Activated CD4-positive, alpha-beta T cell treated with anti-CD3 and anti-CD28 coated beads, Interleukin-2, amount 10 ng/mL, durations not matched to agents 24 days and 14 days (primary cell): ENCODE measurements at regions of chrX and their contacts with region 1.

Region 1: GRCh38 chrX:2608638-2609430 is 82.3 kb upstream of the CD99 start:
- DNase-seq: peak; percentile 97
- H3K4me3 Mint-ChIP-seq: peak overlapping the region; percentile 95
- H3K27ac Mint-ChIP-seq: peak overlapping the region; percentile 93
- H3K4me1 Mint-ChIP-seq: peaks cover 46% of the 10 kb centered on the region
- H3K27me3 Mint-ChIP-seq: no peaks in the 10 kb centered on the region

Region 2: DNA sequence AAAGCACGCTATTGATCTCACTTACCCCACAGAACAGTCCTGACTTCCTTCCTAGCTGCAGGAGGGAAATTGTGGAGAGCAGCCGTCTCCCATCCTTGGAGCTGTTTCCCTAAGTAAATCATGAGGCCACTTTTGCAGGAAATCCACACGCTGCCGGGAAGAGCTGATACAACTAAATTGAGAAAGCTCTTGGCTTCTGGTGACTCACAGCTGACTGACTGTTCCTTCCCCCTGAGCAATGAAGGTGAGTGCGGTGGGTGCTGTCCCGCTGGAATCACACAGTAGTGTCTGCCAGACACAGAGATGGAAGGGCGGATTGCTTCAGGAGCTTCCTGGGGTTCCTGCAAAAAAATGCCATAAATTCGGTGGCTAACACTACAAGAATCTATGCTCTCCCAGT is 725.1 kb before region 1 on chrX:
- intact Hi-C with region 1: no loop called
- DNase-seq: no peak
- H3K4me3 Mint-ChIP-seq: no peak overlapping the region
- H3K27ac Mint-ChIP-seq: no peak overlapping the region
- H3K4me1 Mint-ChIP-seq: no peaks in the 10 kb centered on the region
- H3K27me3 Mint-ChIP-seq: no peaks in the 10 kb centered on the region

Region 3: GRCh38 chrX:2500267-2501075 is 108.4 kb before region 1 on chrX and contains the starts of genes DHRSX and ZBED1:
- intact Hi-C with region 1: loop called (anchors 1 kb)
- DNase-seq: peak; percentile 88
- H3K4me3 Mint-ChIP-seq: peak within 1 kb of the TSS; percentile 82
- H3K27ac Mint-ChIP-seq: peak within 1 kb of the TSS; percentile 83
- H3K4me1 Mint-ChIP-seq: peaks cover 30% of the 10 kb centered on the region
- H3K27me3 Mint-ChIP-seq: no peaks in the 10 kb centered on the region
- total RNA-seq, gene DHRSX: 25.7 and 26.6 TPM in 2 replicates
- total RNA-seq, gene ZBED1: 40.1 and 46.2 TPM in 2 replicates

Region 4: DNA sequence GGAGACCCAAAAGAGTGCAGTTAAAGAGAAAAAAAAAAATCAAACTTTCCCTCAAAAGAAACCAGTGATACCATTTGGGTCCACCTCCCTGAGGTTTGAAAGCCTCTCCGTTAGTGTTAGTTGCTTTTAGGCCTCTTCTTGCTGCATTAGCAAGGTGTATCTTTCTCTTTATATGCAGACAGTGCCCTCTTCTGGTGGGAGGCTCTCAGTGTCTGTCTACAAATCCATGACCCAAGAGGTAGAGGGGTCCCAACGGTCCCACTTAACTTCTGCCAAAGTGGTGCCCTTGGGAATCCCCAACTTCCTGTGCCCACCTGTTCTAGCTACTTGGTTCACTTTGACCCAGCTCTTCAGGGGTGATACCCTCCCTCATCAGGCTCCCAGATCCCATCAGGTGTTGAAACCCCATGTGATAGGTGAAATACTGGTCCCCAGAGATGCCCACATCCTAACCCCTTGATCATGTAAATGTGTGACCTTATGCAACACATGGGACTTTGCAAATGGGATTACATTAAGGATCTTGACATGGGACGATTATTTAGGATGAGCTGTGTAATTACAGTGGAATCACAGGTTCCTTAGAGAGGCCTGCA is 18.5 kb after region 1 on chrX:
- intact Hi-C with region 1: loop called (anchors 2 kb)
- DNase-seq: peak; percentile 83
- H3K4me3 Mint-ChIP-seq: no peak overlapping the region
- H3K27ac Mint-ChIP-seq: peak overlapping the region; percentile 68
- H3K4me1 Mint-ChIP-seq: peaks cover 29% of the 10 kb centered on the region
- H3K27me3 Mint-ChIP-seq: no peaks in the 10 kb centered on the region